SK-N-SH (cell line): ENCODE measurements at regions of chr10 and their contacts with region 1.

Region 1: DNA sequence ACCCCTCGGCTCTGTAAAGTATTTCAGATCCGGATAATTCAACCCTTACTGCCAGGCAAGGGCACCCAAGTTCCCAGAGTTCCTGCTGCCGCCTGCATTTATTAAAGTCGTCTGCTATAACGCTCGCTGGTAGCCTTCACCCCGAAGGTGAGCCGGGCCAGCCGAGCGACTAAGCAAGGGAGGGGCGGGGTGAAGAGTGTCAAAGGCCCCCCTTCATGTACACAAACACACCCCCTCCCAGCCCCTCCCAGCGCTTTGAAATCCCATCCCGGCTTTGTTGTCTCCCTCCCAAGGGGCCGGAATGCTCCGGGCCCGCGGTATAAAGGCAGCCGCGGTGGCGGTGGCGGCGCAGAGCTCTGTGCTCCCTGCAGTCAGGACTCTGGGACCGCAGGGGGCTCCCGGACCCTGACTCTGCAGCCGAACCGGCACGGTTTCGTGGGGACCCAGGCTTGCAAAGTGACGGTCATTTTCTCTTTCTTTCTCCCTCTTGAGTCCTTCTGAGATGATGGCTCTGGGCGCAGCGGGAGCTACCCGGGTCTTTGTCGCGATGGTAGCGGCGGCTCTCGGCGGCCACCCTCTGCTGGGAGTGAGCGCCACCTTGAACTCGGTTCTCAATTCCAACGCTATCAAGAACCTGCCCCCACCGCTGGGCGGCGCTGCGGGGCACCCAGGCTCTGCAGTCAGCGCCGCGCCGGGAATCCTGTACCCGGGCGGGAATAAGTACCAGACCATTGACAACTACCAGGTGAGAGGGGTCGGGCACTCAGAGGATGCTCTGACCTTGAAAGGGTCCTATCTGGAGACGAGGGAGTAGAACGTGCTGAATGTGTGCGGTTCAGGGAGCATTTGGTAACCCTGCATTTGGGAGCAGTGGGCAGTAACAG is at the start of gene DKK1:
- DNase-seq: peak; percentile 89
- H3K4me3 ChIP-seq: peak within 1 kb of the TSS; percentile 95 to 99
- H3K27ac ChIP-seq: peak within 1 kb of the TSS; percentile 95
- H3K4me1 ChIP-seq: peaks cover 6 to 8% of the 10 kb centered on the region in 2 experiments; a peak in 2 of 4 replicates
- H3K27me3 ChIP-seq: no peaks in the 10 kb centered on the region
- CTCF ChIP-seq: peak; percentile 94
- EP300 ChIP-seq: no peak; a peak in 1 of 4 replicates
- RAD21 ChIP-seq: peak; percentile 52
- polyA plus RNA-seq, gene DKK1: 225 and 372 TPM in 2 replicates

Region 2: DNA sequence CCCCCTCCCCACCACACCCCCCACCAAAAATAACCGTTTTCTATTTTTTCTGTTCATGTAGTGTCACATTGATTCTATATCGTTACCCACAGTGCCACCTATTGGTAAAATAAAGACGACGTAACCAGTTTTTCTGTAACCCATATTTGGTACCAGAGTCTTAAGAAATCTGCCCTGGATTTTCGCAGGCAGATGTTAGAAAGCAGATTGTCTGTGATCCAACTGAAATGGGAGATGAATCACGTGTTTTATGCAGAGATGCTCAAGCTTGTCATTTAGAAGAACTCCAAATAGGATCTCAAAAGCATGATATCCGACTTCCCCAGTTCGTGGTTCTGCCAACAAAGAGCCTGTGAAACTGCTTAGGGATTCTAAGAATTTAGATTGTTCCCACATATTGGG is 353.7 kb before region 1 on chr10:
- CTCF ChIA-PET with region 1: no interaction called
- POLR2A ChIA-PET with region 1: no interaction called
- DNase-seq: peak; percentile 34
- H3K4me3 ChIP-seq: peak overlapping the region in 1 of 2 experiments; percentile 27; a peak in 1 of 4 replicates
- H3K27ac ChIP-seq: peak overlapping the region in 1 of 2 experiments; percentile 22; a peak in 2 of 4 replicates
- H3K4me1 ChIP-seq: no peaks in the 10 kb centered on the region; a peak in 1 of 4 replicates
- H3K27me3 ChIP-seq: no peaks in the 10 kb centered on the region
- CTCF ChIP-seq: peak; percentile 71
- EP300 ChIP-seq: peak in 1 of 2 experiments; percentile 9; a peak in 1 of 4 replicates
- RAD21 ChIP-seq: peak; percentile 86

Region 3: GRCh38 chr10:52621635-52622079 is 307.5 kb after region 1 on chr10:
- CTCF ChIA-PET with region 1: interaction called, 11 read pairs
- POLR2A ChIA-PET with region 1: interaction called, 3 read pairs
- DNase-seq: peak; percentile 42
- H3K4me3 ChIP-seq: no peak overlapping the region; a peak in 1 of 4 replicates
- H3K27ac ChIP-seq: peak overlapping the region; percentile 45 to 99
- H3K4me1 ChIP-seq: peaks cover 27 to 32% of the 10 kb centered on the region in 2 experiments
- H3K27me3 ChIP-seq: no peaks in the 10 kb centered on the region
- CTCF ChIP-seq: no peak
- EP300 ChIP-seq: peak; percentile 30 to 94; a peak in 3 of 4 replicates
- RAD21 ChIP-seq: no peak; the same call in 1 of the 2 replicates

Region 4: GRCh38 chr10:52729271-52730104 is 415.3 kb after region 1 on chr10:
- CTCF ChIA-PET with region 1: interaction called, 10 read pairs
- POLR2A ChIA-PET with region 1: no interaction called
- DNase-seq: peak; percentile 56
- H3K4me3 ChIP-seq: no peak overlapping the region; a peak in 1 of 4 replicates
- H3K27ac ChIP-seq: peak overlapping the region in 1 of 2 experiments; percentile 62; a peak in 1 of 4 replicates
- H3K4me1 ChIP-seq: no peaks in the 10 kb centered on the region; a peak in 2 of 4 replicates
- H3K27me3 ChIP-seq: no peaks in the 10 kb centered on the region
- CTCF ChIP-seq: peak; percentile 77
- EP300 ChIP-seq: no peak
- RAD21 ChIP-seq: peak; percentile 86